ENCODE measurements at regions of chr10 and their contacts with region 1.

Region 1: GRCh38 chr10:61189912-61190311 is 245.9 kb upstream of the RHOBTB1 start:
- DNase-seq: no peak
- H3K4me3 ChIP-seq: no peak overlapping the region
- H3K27ac ChIP-seq: no peak overlapping the region
- H3K4me1 ChIP-seq: no peaks in the 10 kb centered on the region
- H3K27me3 ChIP-seq: no peaks in the 10 kb centered on the region
- CTCF ChIP-seq: no peak

Region 2: GRCh38 chr10:61047081-61047480 is 142.8 kb before region 1 on chr10:
- CTCF ChIA-PET with region 1: interaction called, 15 read pairs
- POLR2A ChIA-PET with region 1: no interaction called
- intact Hi-C with region 1: no loop called
- DNase-seq: peak; percentile 48
- H3K4me3 ChIP-seq: no peak overlapping the region
- H3K27ac ChIP-seq: no peak overlapping the region
- H3K4me1 ChIP-seq: peaks cover 15% of the 10 kb centered on the region
- H3K27me3 ChIP-seq: no peaks in the 10 kb centered on the region
- CTCF ChIP-seq: no peak

Measured in A673 (cell line).